Caco-2 (cell line): ENCODE measurements at regions of chr9 and their contacts with region 1.

Region 1: GRCh38 chr9:127396808-127397497 is at the start of gene SLC2A8:
- DNase-seq: peak; percentile 99 to 100
- H3K4me3 ChIP-seq: peak within 1 kb of the TSS; percentile 92
- H3K4me3 Mint-ChIP-seq: peak within 1 kb of the TSS; percentile 97
- H3K27ac Mint-ChIP-seq: peak within 1 kb of the TSS; percentile 93
- H3K4me1 ChIP-seq: peaks cover 40% of the 10 kb centered on the region
- H3K4me1 Mint-ChIP-seq: peaks cover 18% of the 10 kb centered on the region
- H3K27me3 ChIP-seq: no peaks in the 10 kb centered on the region
- H3K27me3 Mint-ChIP-seq: no peaks in the 10 kb centered on the region
- CTCF ChIP-seq: peak; percentile 36 to 47
- total RNA-seq, gene SLC2A8: 141 and 144 TPM in 2 replicates

Region 2: DNA sequence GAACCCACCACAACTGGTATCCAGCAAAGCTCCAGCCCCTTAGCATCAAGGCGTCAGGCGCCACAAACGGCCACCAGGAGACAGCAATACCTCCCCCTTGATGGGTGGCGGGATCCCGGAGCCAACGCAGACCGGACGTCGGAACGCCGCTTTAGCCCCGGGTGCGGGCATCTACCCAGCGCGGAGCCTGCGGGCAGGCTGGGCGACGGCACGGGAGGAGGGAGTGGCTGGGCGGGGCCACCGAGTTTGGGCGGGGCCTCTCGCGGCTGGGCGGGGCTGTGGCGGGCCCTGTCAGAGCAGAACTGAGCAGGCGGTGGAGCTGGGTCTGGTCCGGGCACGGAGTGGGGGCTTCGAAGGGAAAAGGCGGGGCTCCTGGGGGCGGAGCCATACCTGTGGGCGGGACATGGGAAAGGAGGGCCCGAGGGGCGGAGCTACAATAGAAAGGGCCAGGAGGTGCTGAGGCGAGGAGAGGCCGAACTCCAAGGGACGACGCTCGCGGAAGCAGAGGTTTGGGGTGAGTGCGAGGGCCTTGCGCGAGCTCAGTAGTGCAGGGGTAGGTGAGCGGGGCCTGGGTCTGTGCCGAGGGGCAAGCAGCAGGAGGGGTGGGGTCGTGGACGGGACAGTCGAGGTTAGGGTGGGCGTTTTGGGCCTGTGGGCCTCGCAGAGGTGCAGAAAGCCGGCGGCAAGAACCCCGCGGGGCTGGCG is 172.6 kb before region 1 on chr9:
- CTCF ChIA-PET with region 1: interaction called, 16 read pairs
- POLR2A ChIA-PET with region 1: interaction called, 24 read pairs
- intact Hi-C with region 1: loop called (anchors 1 kb)
- DNase-seq: peak; percentile 96 to 97
- H3K4me3 ChIP-seq: peak overlapping the region; percentile 95
- H3K4me3 Mint-ChIP-seq: peak overlapping the region; percentile 92
- H3K27ac Mint-ChIP-seq: peak overlapping the region; percentile 92
- H3K4me1 ChIP-seq: peaks cover 6% of the 10 kb centered on the region
- H3K4me1 Mint-ChIP-seq: peaks cover 18% of the 10 kb centered on the region
- H3K27me3 ChIP-seq: no peaks in the 10 kb centered on the region
- H3K27me3 Mint-ChIP-seq: peaks cover 3% of the 10 kb centered on the region
- CTCF ChIP-seq: no peak

Region 3: DNA sequence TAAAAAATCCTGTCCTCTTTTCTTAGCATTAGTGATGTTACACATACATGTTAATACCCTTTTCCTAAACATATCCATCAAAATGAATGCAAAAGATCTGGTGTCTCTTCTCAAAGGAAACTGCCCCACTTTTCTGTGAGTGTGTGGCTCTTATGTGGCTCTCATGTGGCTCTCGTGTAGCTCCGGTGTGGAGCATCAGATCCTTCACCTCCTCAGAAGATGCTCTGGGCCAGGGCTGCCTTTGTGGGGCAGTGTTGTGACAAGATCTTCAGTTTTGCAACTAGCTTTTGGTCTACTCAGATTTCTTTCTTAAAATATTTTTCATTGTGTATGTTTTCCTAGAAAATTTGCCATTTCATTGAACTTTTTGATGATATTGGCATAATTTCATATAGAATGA is 113.0 kb before region 1 on chr9:
- CTCF ChIA-PET with region 1: interaction called, 9 read pairs
- POLR2A ChIA-PET with region 1: interaction called, 5 read pairs
- intact Hi-C with region 1: loop called (anchors 10 kb)
- DNase-seq: peak; percentile 41 to 50
- H3K4me3 ChIP-seq: no peak overlapping the region
- H3K4me3 Mint-ChIP-seq: no peak overlapping the region
- H3K27ac Mint-ChIP-seq: no peak overlapping the region
- H3K4me1 ChIP-seq: peaks cover 5% of the 10 kb centered on the region; the same call in 1 of the 2 replicates
- H3K4me1 Mint-ChIP-seq: peaks cover 6% of the 10 kb centered on the region
- H3K27me3 ChIP-seq: no peaks in the 10 kb centered on the region
- H3K27me3 Mint-ChIP-seq: no peaks in the 10 kb centered on the region
- CTCF ChIP-seq: no peak

Region 4: DNA sequence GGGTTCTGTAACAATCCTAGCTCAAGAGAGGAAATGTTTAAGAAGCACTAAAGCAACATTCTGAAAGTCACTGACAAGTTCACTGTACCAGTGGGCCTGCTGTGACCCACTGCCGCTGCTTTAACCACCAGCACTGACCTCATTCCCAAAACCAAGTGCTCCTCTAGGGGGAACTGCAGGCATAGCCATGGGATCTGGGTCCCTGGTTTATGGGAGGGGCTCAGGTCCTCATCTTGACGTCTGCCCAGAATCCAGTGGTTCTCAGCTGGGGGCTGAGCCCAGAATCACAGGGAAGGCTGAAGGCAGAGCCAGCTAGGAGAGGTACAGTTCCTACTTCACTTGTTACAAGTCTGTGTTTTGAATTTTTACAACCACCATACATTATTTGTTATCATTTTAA is 36.1 kb before region 1 on chr9:
- CTCF ChIA-PET with region 1: interaction called, 54 read pairs
- POLR2A ChIA-PET with region 1: interaction called, 17 read pairs
- intact Hi-C with region 1: loop called (anchors 1 kb)
- DNase-seq: peak; percentile 79 to 81
- H3K4me3 ChIP-seq: no peak overlapping the region
- H3K4me3 Mint-ChIP-seq: no peak overlapping the region
- H3K27ac Mint-ChIP-seq: peak overlapping the region; percentile 70
- H3K4me1 ChIP-seq: peaks cover 12% of the 10 kb centered on the region
- H3K4me1 Mint-ChIP-seq: peaks cover 18% of the 10 kb centered on the region
- H3K27me3 ChIP-seq: no peaks in the 10 kb centered on the region
- H3K27me3 Mint-ChIP-seq: no peaks in the 10 kb centered on the region
- CTCF ChIP-seq: peak; percentile 66 to 75

Region 5: GRCh38 chr9:127423934-127424675 is 27.2 kb after region 1 on chr9 and contains the start of gene ZNF79:
- CTCF ChIA-PET with region 1: interaction called, 8 read pairs
- POLR2A ChIA-PET with region 1: interaction called, 37 read pairs
- intact Hi-C with region 1: no loop called
- DNase-seq: peak; percentile 93 to 94
- H3K4me3 ChIP-seq: peak within 1 kb of the TSS; percentile 67
- H3K4me3 Mint-ChIP-seq: peak within 1 kb of the TSS; percentile 100
- H3K27ac Mint-ChIP-seq: peak within 1 kb of the TSS; percentile 99
- H3K4me1 ChIP-seq: peaks cover 15% of the 10 kb centered on the region
- H3K4me1 Mint-ChIP-seq: peaks cover 17% of the 10 kb centered on the region
- H3K27me3 ChIP-seq: no peaks in the 10 kb centered on the region
- H3K27me3 Mint-ChIP-seq: no peaks in the 10 kb centered on the region
- CTCF ChIP-seq: no peak
- total RNA-seq, gene ZNF79: 9.2 and 9.3 TPM in 2 replicates

Region 6: DNA sequence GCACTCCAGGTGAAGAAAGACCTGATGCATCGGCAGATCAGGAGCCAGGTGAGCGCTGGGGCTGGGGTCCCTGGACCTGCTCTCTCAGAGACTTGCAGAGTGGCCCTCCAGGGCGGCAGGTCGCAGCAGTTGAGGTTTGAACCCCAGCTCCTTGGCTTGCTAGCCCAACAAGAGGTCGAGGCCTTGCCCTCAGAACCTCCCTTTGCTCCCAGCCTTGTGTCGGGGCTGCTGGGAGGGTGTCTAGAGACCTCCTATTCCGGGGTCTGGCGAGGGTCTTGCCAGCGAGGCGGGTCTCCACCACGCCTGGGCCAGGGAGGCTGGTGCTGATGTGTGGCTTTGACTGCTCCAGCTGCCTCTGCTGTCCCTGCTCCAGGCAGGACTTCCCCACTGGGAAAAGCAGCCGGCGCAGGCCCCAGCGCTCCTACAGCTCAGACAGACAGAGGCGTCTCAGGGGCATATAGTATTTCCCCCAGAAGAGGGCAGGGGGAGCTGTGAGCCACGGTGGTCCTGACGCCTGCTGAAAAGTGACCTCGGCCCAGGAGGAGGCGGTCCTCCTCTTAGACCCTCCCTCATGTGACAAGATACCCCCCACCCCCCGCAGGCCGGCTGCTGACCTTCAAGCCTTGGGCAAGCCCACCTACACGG is 92.6 kb after region 1 on chr9:
- CTCF ChIA-PET with region 1: no interaction called
- POLR2A ChIA-PET with region 1: no interaction called
- intact Hi-C with region 1: no loop called
- DNase-seq: peak in 1 of 2 experiments; percentile 43
- H3K4me3 ChIP-seq: no peak overlapping the region
- H3K4me3 Mint-ChIP-seq: no peak overlapping the region
- H3K27ac Mint-ChIP-seq: no peak overlapping the region
- H3K4me1 ChIP-seq: no peaks in the 10 kb centered on the region
- H3K4me1 Mint-ChIP-seq: no peaks in the 10 kb centered on the region
- H3K27me3 ChIP-seq: no peaks in the 10 kb centered on the region
- H3K27me3 Mint-ChIP-seq: no peaks in the 10 kb centered on the region
- CTCF ChIP-seq: peak in 1 of 2 experiments; percentile 25